ENCODE measurements at regions of chr11 and their contacts with region 1.

Region 1: DNA sequence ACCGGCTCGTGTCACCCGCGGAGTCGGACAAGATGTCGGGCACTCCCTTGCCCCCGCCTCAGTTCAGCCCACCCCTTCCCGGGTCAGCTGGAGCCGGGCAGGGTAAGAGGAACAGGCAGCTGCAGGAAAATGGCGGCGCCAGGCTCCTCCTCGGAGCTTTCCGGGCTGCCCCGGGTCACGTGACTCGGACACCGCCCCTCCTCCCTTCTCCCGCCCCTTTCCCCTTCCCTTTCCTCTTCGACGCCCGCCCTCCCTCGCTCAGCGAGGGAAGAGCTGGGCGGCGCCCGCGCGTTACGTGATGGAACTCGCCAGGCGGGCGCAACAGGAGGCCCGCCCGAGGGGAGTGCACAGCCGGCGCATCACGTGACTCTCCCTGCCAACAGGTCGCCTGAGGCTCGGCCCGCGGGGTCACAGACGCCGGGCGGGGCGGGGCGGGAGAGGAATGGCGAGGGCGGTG is at the start of gene PICALM:
- DNase-seq: peak; percentile 92 to 100 (median 96)
- ATAC-seq: peak; percentile 91
- H3K4me3 ChIP-seq: peak within 1 kb of the TSS; percentile 80
- H3K4me3 Mint-ChIP-seq: peak within 1 kb of the TSS; percentile 87
- H3K27ac ChIP-seq: peak within 1 kb of the TSS; percentile 75 to 92
- H3K27ac Mint-ChIP-seq: peak within 1 kb of the TSS; percentile 82
- H3K4me1 ChIP-seq: peaks cover 21% of the 10 kb centered on the region
- H3K4me1 Mint-ChIP-seq: peaks cover 41% of the 10 kb centered on the region
- H3K27me3 ChIP-seq: no peaks in the 10 kb centered on the region
- H3K27me3 Mint-ChIP-seq: no peaks in the 10 kb centered on the region
- CTCF ChIP-seq: no peak
- total RNA-seq, gene PICALM: 73.3 to 77.3 TPM

Region 2: DNA sequence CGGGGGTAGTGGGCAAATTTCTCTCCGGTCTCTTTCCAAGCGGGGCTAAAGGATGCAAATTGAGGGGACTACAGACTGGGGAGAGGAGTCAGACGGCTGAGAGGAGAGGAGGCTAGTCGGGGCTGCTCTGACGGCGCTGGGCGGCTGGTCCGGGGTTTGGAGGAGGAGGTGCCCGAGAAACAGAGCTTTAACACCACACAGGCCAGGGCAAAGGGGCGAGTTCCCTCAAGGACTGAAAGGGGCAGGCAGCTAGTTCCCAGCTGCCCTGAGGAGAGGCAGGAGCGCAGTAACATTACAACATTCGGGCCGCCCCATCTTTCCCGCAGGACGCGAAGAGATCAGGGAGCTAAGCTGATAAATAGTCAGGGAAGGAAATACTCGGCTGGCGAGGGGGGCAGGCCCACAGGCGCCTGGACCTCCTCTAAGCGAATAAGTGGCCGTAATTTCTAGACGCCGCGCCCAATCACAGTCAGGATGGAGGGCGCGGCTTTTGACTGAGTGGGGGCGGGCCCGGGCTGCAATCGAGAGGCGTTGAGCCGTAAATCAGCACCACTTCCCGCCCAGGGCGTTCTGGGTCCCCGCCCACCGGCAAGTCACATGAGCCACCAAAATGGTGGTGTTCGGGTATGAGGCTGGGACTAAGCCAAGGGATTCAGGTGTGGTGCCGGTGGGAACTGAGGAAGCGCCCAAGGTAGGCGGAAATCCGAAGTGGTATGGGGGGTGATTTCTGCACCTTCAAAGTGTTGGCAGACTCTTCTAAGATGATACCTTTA is 440.8 kb before region 1 on chr11 and contains the start of gene TMEM126B:
- CTCF ChIA-PET with region 1: no interaction called
- POLR2A ChIA-PET with region 1: interaction called, 10 read pairs
- intact Hi-C with region 1: loop called in 1 of 2 experiments (anchors 5 kb)
- DNase-seq: peak; percentile 89 to 97 (median 94)
- ATAC-seq: peak; percentile 96
- H3K4me3 ChIP-seq: peak within 1 kb of the TSS; percentile 71
- H3K4me3 Mint-ChIP-seq: peak within 1 kb of the TSS; percentile 96
- H3K27ac ChIP-seq: peak within 1 kb of the TSS; percentile 69 to 83
- H3K27ac Mint-ChIP-seq: peak within 1 kb of the TSS; percentile 92
- H3K4me1 ChIP-seq: peaks cover 13% of the 10 kb centered on the region
- H3K4me1 Mint-ChIP-seq: peaks cover 59% of the 10 kb centered on the region
- H3K27me3 ChIP-seq: no peaks in the 10 kb centered on the region
- H3K27me3 Mint-ChIP-seq: no peaks in the 10 kb centered on the region
- CTCF ChIP-seq: no peak
- total RNA-seq, gene TMEM126B: 16.3 to 16.8 TPM

Region 3: DNA sequence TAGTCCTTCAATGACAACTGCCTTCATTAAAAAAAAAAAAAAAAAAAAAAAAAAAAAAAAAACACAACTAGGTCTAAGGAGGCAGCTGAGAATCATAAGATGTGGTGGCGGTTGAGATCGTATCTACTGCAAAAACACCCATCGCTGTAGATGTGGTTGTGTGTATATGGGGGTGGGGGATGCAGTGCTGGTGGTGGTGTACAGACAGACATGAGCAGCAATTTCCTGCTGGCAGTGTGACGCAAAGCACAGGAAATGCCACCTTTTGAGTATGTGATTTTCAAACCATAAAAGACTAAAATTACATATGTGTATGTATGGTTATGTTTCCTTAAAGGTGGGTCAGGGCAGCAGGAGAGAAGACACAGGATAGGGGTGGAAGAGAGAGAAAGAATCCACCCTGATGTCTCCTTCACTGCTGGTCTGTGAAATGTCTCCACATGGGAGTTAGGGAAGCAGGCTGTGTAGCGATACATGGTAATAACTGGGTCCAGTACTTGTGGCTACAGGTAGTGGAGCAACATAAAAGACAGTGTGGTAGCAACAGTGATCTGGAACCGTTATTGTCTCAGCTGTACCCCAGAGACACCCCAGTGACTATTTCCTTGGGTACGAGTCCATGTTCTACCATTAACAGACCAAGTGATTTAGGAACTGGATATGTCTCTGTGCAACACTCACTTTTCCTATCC is 315.9 kb before region 1 on chr11:
- CTCF ChIA-PET with region 1: no interaction called
- POLR2A ChIA-PET with region 1: no interaction called
- intact Hi-C with region 1: loop called (anchors 5 to 10 kb)
- DNase-seq: peak; percentile 70 to 99 (median 84)
- ATAC-seq: peak; percentile 84
- H3K4me3 ChIP-seq: peak overlapping the region; percentile 32
- H3K4me3 Mint-ChIP-seq: peak overlapping the region; percentile 87
- H3K27ac ChIP-seq: peak overlapping the region; percentile 52 to 66
- H3K27ac Mint-ChIP-seq: peak overlapping the region; percentile 91
- H3K4me1 ChIP-seq: peaks cover 77% of the 10 kb centered on the region
- H3K4me1 Mint-ChIP-seq: peaks cover 95% of the 10 kb centered on the region
- H3K27me3 ChIP-seq: no peaks in the 10 kb centered on the region
- H3K27me3 Mint-ChIP-seq: peaks cover 7% of the 10 kb centered on the region
- CTCF ChIP-seq: peak; percentile 22

Region 4: DNA sequence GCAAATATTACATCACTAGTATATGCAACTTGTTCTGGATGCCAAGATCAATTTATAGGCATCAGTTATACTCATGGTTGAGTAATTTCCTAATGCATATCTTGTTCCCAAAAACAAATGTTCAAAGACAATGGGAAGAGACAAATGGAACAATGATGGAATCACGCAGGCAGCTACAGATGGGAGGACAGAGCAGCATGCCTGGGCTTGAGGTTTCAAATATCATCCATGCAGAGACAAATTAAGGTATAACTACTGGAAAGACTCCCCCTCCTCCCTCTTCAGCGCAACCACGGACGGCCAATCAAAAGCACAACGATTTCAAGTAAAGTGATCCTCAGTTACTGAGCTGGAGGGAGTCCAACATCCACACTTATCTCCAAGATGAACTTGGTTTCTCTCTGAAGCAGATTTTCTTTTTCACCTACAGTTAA is 107.0 kb before region 1 on chr11:
- CTCF ChIA-PET with region 1: no interaction called
- POLR2A ChIA-PET with region 1: no interaction called
- intact Hi-C with region 1: no loop called
- DNase-seq: no peak
- ATAC-seq: no peak
- H3K4me3 ChIP-seq: no peak overlapping the region
- H3K4me3 Mint-ChIP-seq: no peak overlapping the region
- H3K27ac ChIP-seq: no peak overlapping the region
- H3K27ac Mint-ChIP-seq: no peak overlapping the region
- H3K4me1 ChIP-seq: no peaks in the 10 kb centered on the region
- H3K4me1 Mint-ChIP-seq: no peaks in the 10 kb centered on the region
- H3K27me3 ChIP-seq: no peaks in the 10 kb centered on the region
- H3K27me3 Mint-ChIP-seq: no peaks in the 10 kb centered on the region
- CTCF ChIP-seq: no peak

Region 5: GRCh38 chr11:86041975-86042378 is 27.0 kb before region 1 on chr11:
- CTCF ChIA-PET with region 1: interaction called, 42 read pairs
- POLR2A ChIA-PET with region 1: interaction called, 22 read pairs
- intact Hi-C with region 1: loop called (anchors 2 kb)
- DNase-seq: peak in 9 of 14 experiments; percentile 11 to 88 (median 34)
- ATAC-seq: peak; percentile 98
- H3K4me3 ChIP-seq: no peak overlapping the region
- H3K4me3 Mint-ChIP-seq: no peak overlapping the region
- H3K27ac ChIP-seq: no peak overlapping the region
- H3K27ac Mint-ChIP-seq: peak overlapping the region; percentile 27
- H3K4me1 ChIP-seq: peaks cover 16% of the 10 kb centered on the region
- H3K4me1 Mint-ChIP-seq: peaks cover 62% of the 10 kb centered on the region
- H3K27me3 ChIP-seq: no peaks in the 10 kb centered on the region
- H3K27me3 Mint-ChIP-seq: no peaks in the 10 kb centered on the region
- CTCF ChIP-seq: peak; percentile 93

Region 6: DNA sequence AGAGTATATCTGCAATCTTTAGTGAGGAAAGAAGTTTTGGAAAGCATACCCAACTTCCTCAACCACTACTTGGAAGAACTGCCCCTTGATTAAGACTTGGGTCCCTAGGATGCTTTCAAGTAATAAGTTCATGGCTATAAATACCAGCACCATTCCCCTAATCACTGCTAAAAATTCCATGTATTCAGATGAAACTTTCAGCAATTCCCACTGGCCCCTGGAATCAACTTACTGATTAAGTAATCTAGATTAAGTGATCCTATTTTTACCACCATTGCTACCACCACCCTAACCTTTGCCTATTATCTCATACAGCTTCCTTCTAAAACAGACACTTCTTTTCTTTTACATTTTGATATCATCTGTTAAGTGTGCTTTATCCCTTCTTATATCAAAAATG is 10.6 kb before region 1 on chr11:
- CTCF ChIA-PET with region 1: interaction called, 3 read pairs
- POLR2A ChIA-PET with region 1: interaction called, 27 read pairs
- intact Hi-C with region 1: loop called in 1 of 2 experiments (anchors 1 kb)
- DNase-seq: no peak
- ATAC-seq: no peak
- H3K4me3 ChIP-seq: no peak overlapping the region
- H3K4me3 Mint-ChIP-seq: peak overlapping the region; percentile 12
- H3K27ac ChIP-seq: no peak overlapping the region
- H3K27ac Mint-ChIP-seq: no peak overlapping the region
- H3K4me1 ChIP-seq: peaks cover 41% of the 10 kb centered on the region
- H3K4me1 Mint-ChIP-seq: peaks cover 87% of the 10 kb centered on the region
- H3K27me3 ChIP-seq: no peaks in the 10 kb centered on the region
- H3K27me3 Mint-ChIP-seq: no peaks in the 10 kb centered on the region
- CTCF ChIP-seq: no peak

Region 7: DNA sequence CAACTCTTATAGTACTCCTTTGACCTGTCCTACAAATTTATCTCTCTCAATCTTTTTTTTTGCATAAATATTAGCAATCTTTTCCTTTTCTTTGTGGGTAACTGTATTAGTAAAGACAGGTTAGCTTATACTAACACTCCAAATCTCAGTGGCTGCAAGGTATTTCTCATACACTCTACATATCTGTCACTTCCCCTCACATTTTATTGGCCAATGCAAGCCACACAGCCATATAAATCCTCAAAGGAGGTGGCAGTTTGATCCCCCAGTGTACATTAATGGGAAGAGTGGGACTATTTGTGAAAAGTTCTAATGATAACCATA is 133.0 kb after region 1 on chr11:
- CTCF ChIA-PET with region 1: interaction called, 4 read pairs
- POLR2A ChIA-PET with region 1: interaction called, 18 read pairs
- intact Hi-C with region 1: no loop called
- DNase-seq: peak in 4 of 14 experiments; percentile 6 to 43 (median 30)
- ATAC-seq: peak; percentile 71
- H3K4me3 ChIP-seq: peak overlapping the region; percentile 57
- H3K4me3 Mint-ChIP-seq: no peak overlapping the region
- H3K27ac ChIP-seq: no peak overlapping the region
- H3K27ac Mint-ChIP-seq: no peak overlapping the region
- H3K4me1 ChIP-seq: peaks cover 7% of the 10 kb centered on the region
- H3K4me1 Mint-ChIP-seq: no peaks in the 10 kb centered on the region
- H3K27me3 ChIP-seq: no peaks in the 10 kb centered on the region
- H3K27me3 Mint-ChIP-seq: no peaks in the 10 kb centered on the region
- CTCF ChIP-seq: no peak

Region 8: DNA sequence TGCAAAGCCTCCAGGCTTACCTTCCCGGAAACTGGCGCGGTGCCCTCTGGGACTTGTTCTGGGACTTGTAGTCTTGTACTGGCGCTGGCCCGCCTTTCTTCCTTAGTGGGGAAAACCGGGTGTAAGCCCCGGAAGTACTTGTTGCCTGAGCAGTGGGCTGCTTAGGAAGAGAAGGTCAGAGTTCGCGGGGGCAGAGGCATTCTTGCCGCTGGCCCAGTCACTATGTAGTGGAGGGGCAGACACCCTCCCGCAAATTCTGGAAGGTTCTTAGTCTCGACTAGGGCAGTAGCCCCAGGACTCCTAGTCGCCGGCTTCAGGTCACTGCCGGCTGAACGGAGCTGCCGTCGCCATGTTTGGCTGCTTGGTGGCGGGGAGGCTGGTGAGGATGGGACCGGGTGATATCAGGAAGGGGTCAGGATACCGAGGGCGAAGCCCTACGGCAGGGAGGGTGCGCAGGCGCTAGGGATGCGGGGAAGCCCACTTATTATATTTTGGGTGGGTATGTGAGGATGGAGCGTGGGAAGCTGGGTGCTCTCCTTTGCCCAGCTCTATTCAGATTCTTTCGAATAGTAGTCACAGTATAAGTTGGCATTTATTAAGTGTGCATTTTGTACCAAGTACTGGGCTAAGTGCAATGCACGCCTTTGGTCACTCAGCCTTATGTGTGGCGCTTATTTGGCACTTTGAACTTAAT is 233.3 kb after region 1 on chr11 and contains the start of gene HIKESHI:
- CTCF ChIA-PET with region 1: no interaction called
- POLR2A ChIA-PET with region 1: interaction called, 5 read pairs
- intact Hi-C with region 1: loop called in 1 of 2 experiments (anchors 1 kb)
- DNase-seq: peak; percentile 81 to 95 (median 90)
- ATAC-seq: peak; percentile 97
- H3K4me3 ChIP-seq: peak within 1 kb of the TSS; percentile 83
- H3K4me3 Mint-ChIP-seq: peak within 1 kb of the TSS; percentile 99
- H3K27ac ChIP-seq: peak within 1 kb of the TSS; percentile 58 to 85
- H3K27ac Mint-ChIP-seq: peak within 1 kb of the TSS; percentile 98
- H3K4me1 ChIP-seq: peaks cover 3% of the 10 kb centered on the region
- H3K4me1 Mint-ChIP-seq: peaks cover 33% of the 10 kb centered on the region
- H3K27me3 ChIP-seq: no peaks in the 10 kb centered on the region
- H3K27me3 Mint-ChIP-seq: no peaks in the 10 kb centered on the region
- CTCF ChIP-seq: no peak
- total RNA-seq, gene HIKESHI: 6.3 to 6.6 TPM

Region 9: DNA sequence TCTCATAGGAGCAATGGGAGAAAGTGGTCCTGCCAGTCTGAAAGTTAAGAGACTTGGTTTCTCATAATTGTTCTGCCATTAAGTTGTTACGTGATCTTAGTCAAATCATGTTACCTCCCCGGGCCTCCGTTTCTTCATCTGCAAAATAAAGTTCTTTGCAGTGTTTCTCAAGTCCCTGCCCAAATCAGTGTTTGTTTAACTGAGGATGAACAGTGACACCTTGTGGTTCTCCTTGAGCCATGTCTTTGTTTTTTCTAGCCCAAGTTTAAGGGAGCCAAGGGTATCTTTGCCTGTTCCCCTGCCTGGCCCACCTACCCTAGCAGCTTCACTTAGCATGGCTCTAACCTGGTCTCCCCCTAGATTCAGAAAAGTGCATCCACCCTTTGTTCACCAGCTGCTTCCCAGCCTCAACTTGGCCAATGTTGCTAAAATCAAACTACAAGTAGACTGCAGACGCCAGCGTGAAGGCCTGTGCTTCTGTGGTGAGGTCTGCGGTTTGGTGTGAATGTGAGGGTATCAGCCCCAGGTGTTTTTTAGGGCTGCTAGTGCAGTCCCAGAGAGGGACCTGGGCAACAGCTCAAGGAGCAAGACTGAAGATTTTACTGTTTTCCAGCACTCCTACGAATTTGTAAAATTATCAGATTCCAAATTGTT is 850.7 kb after region 1 on chr11:
- CTCF ChIA-PET with region 1: no interaction called
- POLR2A ChIA-PET with region 1: no interaction called
- intact Hi-C with region 1: no loop called
- DNase-seq: peak in 3 of 14 experiments; percentile 20 to 24 (median 22)
- ATAC-seq: no peak
- H3K4me3 ChIP-seq: no peak overlapping the region
- H3K4me3 Mint-ChIP-seq: no peak overlapping the region
- H3K27ac ChIP-seq: no peak overlapping the region
- H3K27ac Mint-ChIP-seq: no peak overlapping the region
- H3K4me1 ChIP-seq: peaks cover 3% of the 10 kb centered on the region
- H3K4me1 Mint-ChIP-seq: peaks cover 9% of the 10 kb centered on the region
- H3K27me3 ChIP-seq: no peaks in the 10 kb centered on the region
- H3K27me3 Mint-ChIP-seq: no peaks in the 10 kb centered on the region
- CTCF ChIP-seq: no peak